CD4-positive, alpha-beta memory T cell (primary cell): ENCODE measurements at regions of chr7 and their contacts with region 1.

Region 1: DNA sequence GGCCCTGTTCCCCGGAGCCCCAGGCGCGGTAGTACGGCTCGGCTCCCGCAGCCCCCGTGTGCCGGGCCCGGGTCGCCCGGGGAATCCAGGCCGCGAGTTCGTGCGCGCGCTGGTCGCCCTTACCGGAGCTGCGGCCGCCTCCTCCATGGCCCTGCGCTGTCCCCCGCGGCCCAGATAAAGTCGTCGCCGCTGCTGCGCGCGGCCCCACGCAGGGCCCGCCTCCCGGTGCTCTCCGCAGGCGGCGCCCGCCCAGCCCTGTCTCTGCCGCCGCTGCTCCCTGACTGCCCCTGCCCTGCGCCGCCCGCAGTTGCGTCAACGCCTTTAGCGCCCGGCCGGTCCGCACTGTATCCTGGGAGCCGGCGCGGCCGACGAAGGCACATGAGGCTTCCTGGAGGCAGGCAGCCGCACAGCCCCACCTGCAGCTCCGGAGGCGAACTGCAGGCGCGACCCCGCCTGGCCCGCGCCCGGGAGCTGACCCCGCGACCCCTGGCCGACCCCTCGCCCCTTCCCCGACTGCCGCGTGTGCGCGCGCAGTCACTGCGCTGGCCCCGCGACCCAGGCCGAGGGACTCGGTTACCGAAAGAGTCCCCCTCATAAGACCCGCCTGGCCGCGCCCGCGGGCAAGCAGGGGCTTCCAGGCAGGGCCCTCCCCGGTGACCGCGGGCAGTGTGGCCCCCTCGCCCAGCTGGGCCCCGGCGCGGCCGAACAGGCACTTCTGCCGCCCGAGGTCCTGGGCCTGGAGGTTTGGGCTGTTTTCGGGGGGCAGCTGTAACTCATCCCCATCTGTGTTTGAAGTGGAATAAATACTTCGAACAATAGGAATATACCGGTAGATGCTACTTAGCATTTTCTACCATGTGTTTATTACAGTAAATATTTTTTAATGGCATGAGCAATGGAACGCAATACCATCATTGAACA is 127.1 kb upstream of the ZNF746 start:
- DNase-seq: peak; percentile 89 to 92 (median 92)
- H3K4me3 ChIP-seq: peak overlapping the region; percentile 72 to 76
- H3K4me3 Mint-ChIP-seq: peak overlapping the region; percentile 85 to 97 (median 92)
- H3K27ac ChIP-seq: peak overlapping the region; percentile 66
- H3K27ac Mint-ChIP-seq: peak overlapping the region; percentile 77 to 96 (median 88)
- H3K4me1 ChIP-seq: peaks cover 41% of the 10 kb centered on the region
- H3K4me1 Mint-ChIP-seq: peaks cover 23 to 54% (median 36%) of the 10 kb centered on the region in 4 donors
- H3K27me3 ChIP-seq: peaks cover 4% of the 10 kb centered on the region
- H3K27me3 Mint-ChIP-seq: peaks cover 5 to 10% of the 10 kb centered on the region in 2 donors

Region 2: DNA sequence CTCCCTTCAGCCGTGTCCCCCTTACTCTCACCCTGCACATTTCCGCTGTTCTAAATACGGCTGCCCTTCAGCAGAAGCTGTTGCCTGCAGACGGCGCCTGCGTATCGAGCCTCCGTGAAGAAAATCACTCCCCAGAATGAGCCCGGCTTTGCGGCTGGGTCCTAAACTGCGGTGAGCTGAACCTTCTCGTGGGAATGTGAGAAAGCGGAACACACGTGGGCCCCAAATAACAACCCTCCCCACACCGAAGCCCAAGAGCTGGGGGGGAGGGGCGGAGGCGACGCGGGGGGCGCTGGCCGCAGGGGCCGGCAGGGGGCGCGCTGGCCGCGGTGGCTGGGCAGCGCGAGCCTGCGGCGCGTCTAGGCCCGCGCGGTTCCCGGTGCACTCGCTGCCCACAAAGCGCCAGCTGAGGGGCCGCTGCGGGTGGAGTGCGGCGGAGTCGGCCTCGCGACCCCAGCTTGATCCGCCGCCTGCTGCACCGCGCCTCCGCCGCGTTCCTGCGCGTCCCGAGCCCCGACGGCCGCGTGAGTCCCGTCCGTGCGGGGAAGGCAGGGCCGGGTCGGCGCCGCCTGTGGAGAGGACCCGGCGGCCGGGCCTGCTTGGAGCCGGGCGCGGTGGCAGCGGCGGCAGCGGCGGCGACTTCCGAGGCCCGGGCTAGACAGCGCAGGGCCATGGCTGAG is 477.5 kb before region 1 on chr7 and contains the start of gene ZNF398:
- CTCF ChIA-PET with region 1: no interaction called
- POLR2A ChIA-PET with region 1: interaction called, 3 read pairs
- intact Hi-C with region 1: loop called (anchors 10 kb)
- DNase-seq: peak; percentile 83 to 89 (median 85)
- H3K4me3 ChIP-seq: peak within 1 kb of the TSS; percentile 71 to 74
- H3K4me3 Mint-ChIP-seq: peak within 1 kb of the TSS; percentile 85 to 95 (median 92)
- H3K27ac ChIP-seq: peak within 1 kb of the TSS; percentile 86
- H3K27ac Mint-ChIP-seq: peak within 1 kb of the TSS; percentile 87 to 97 (median 96)
- H3K4me1 ChIP-seq: peaks cover 35% of the 10 kb centered on the region
- H3K4me1 Mint-ChIP-seq: peaks cover 18 to 46% (median 32%) of the 10 kb centered on the region in 4 donors
- H3K27me3 ChIP-seq: no peaks in the 10 kb centered on the region
- H3K27me3 Mint-ChIP-seq: no peaks in the 10 kb centered on the region
- total RNA-seq, gene ZNF398: 26.9 to 28.4 TPM

Region 3: DNA sequence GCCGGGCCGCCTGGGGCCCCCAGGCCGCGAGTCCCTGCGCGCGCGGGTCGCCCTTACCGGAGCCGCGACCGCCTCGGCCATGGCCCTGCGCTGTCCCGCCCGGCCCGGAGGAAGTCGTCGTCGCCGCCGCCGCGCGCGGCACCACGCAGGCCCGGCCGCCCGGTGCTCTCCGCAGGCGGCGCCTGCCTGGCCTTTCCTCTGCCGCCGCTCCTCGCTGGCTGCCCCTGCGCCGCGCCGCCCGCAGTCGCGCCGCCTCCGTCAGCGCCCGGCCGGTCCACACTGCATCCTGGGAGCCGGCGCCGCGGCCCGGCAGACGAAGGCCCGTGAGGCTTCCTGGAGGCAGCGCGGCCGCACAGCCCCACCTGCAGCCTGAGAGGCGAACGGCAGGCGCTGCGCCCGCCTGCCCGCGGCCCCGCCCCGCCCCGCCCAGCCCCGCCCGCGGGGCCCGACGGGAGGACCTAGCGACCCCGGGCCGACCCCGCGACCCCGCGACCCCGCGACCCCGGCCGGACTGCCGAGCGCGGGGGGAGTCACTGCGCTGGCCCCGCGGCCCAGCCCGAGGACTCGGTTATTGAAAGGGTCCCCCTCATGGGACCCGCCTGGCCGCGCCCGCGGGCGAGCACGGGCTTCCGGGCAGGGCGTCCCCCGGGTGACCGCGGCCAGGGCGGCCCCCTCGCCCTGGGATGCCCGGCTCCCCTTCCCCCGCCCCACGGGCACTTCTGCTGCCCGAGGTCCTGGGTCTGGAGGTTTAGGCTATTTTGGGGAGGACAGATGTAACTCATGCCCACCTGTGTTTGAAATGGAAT is 127.0 kb before region 1 on chr7 and contains the start of gene ZNF746:
- CTCF ChIA-PET with region 1: interaction called, 6 read pairs
- POLR2A ChIA-PET with region 1: no interaction called
- intact Hi-C with region 1: loop called (anchors 1 kb)
- DNase-seq: peak; percentile 77 to 81 (median 78)
- H3K4me3 ChIP-seq: peak within 1 kb of the TSS; percentile 62 to 84
- H3K4me3 Mint-ChIP-seq: peak within 1 kb of the TSS; percentile 92 to 99 (median 95)
- H3K27ac ChIP-seq: peak within 1 kb of the TSS; percentile 63
- H3K27ac Mint-ChIP-seq: peak within 1 kb of the TSS; percentile 91 to 98 (median 96)
- H3K4me1 ChIP-seq: peaks cover 31% of the 10 kb centered on the region
- H3K4me1 Mint-ChIP-seq: peaks cover 21 to 44% (median 27%) of the 10 kb centered on the region in 4 donors
- H3K27me3 ChIP-seq: no peaks in the 10 kb centered on the region
- H3K27me3 Mint-ChIP-seq: no peaks in the 10 kb centered on the region
- total RNA-seq, gene ZNF746: 25.2 to 25.6 TPM

Region 4: GRCh38 chr7:149599636-149600206 is 25.0 kb before region 1 on chr7:
- CTCF ChIA-PET with region 1: interaction called, 10 read pairs
- POLR2A ChIA-PET with region 1: interaction called, 6 read pairs
- intact Hi-C with region 1: loop called (anchors 1 kb)
- DNase-seq: peak in 3 of 5 donors; percentile 28 to 44 (median 37)
- H3K4me3 ChIP-seq: no peak overlapping the region
- H3K4me3 Mint-ChIP-seq: peak overlapping the region; percentile 61 to 83 (median 71)
- H3K27ac ChIP-seq: peak overlapping the region; percentile 2
- H3K27ac Mint-ChIP-seq: peak overlapping the region; percentile 61 to 93 (median 87)
- H3K4me1 ChIP-seq: peaks cover 26% of the 10 kb centered on the region
- H3K4me1 Mint-ChIP-seq: peaks cover 19 to 41% (median 30%) of the 10 kb centered on the region in 4 donors
- H3K27me3 ChIP-seq: no peaks in the 10 kb centered on the region
- H3K27me3 Mint-ChIP-seq: no peaks in the 10 kb centered on the region

Region 5: GRCh38 chr7:149714050-149714909 is 89.6 kb after region 1 on chr7:
- CTCF ChIA-PET with region 1: interaction called, 3 read pairs
- POLR2A ChIA-PET with region 1: interaction called, 3 read pairs
- intact Hi-C with region 1: loop called (anchors 2 kb)
- DNase-seq: peak; percentile 80 to 90 (median 82)
- H3K4me3 ChIP-seq: peak overlapping the region; percentile 60 to 72
- H3K4me3 Mint-ChIP-seq: peak overlapping the region; percentile 76 to 87 (median 83)
- H3K27ac ChIP-seq: peak overlapping the region; percentile 62
- H3K27ac Mint-ChIP-seq: peak overlapping the region in 5 of 7 donors; percentile 35 to 85 (median 64)
- H3K4me1 ChIP-seq: peaks cover 23% of the 10 kb centered on the region
- H3K4me1 Mint-ChIP-seq: peaks cover 16 to 31% (median 18%) of the 10 kb centered on the region in 4 donors
- H3K27me3 ChIP-seq: no peaks in the 10 kb centered on the region
- H3K27me3 Mint-ChIP-seq: no peaks in the 10 kb centered on the region